Right cardiac atrium (tissue), 5 donors: ENCODE measurements at regions of chr14 and their contacts with region 1.

Region 1: DNA sequence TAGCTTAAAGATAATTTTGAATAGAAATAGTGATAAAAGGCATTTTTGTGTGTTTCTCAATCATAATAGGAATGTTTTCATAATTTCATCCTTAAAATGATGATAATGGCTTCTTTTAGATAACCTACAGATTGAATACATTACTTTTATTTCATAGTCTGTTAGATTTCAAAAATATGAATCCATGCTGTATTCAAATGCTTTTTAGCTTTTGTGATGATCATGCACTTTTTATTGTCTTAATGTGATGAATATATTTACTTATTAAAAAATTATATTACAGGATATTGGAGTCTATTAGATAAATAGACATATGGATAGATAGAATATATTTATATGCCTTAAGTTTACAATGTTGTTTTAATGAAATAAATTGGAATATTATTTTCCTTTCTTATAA is 886.8 kb upstream of the NOVA1 start:
- DNase-seq: no peak
- ATAC-seq: no peak
- H3K4me3 ChIP-seq: no peak overlapping the region
- H3K27ac ChIP-seq: no peak overlapping the region
- H3K4me1 ChIP-seq: no peaks in the 10 kb centered on the region
- H3K27me3 ChIP-seq: no peaks in the 10 kb centered on the region

Region 2: GRCh38 chr14:27553790-27554189 is 69.2 kb after region 1 on chr14:
- intact Hi-C with region 1: loop called in 1 of 4 experiments (anchors 10 kb)
- DNase-seq: no peak
- ATAC-seq: no peak
- H3K4me3 ChIP-seq: no peak overlapping the region
- H3K27ac ChIP-seq: no peak overlapping the region
- H3K4me1 ChIP-seq: no peaks in the 10 kb centered on the region
- H3K27me3 ChIP-seq: no peaks in the 10 kb centered on the region